ENCODE measurements at regions of chr11 and their contacts with region 1.

Region 1: DNA sequence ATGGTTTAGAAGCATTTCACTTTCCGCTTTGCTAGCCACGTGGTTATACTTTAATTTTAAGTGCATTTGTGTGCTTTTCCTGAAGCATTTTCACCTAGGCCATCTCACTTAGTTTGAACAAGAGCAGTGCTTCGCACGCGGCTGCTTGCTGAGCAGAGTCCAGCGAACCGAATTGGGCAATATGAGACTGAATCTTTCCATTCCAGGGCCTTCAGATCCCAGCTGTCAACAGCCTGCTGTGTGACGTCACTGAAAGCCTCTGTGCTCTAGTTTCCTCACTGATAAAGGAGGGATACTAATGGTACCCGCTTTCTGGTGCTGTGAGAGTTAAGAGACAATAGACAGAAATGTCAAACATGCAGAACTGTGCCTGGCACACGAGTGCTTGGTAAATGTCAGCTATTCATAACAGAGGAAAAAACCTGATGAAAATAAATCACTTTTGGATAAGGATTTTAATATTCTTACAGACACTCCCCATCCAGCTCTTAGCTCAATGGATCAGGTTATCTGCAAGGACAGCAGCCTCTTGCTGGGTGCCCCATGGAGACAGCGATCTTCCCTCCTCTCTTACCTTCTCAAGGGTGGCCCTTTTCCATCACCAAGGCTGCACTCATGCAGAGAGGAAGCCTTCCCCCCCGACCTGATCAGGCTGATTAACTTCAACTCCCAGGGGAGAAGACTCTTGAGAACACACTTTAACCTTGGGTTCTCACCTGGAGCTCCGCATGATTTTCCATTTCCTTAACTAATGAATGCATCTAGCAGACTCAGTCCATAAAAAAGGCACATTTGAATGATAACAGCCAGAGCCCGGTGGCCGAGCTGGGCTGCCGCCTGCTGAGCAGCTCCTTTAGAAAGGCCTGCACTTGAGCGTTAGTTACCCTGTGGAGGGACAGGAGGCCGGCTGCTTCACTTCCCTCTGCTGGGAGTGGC is 3.5 kb upstream of the GLB1L3 start:
- DNase-seq: no peak
- H3K4me3 ChIP-seq: no peak overlapping the region
- CTCF ChIP-seq: no peak

Region 2: GRCh38 chr11:134244655-134245054 is 28.0 kb before region 1 on chr11:
- CTCF ChIA-PET with region 1: no interaction called
- POLR2A ChIA-PET with region 1: no interaction called
- DNase-seq: no peak
- H3K4me3 ChIP-seq: no peak overlapping the region
- CTCF ChIP-seq: peak; percentile 55

Region 3: DNA sequence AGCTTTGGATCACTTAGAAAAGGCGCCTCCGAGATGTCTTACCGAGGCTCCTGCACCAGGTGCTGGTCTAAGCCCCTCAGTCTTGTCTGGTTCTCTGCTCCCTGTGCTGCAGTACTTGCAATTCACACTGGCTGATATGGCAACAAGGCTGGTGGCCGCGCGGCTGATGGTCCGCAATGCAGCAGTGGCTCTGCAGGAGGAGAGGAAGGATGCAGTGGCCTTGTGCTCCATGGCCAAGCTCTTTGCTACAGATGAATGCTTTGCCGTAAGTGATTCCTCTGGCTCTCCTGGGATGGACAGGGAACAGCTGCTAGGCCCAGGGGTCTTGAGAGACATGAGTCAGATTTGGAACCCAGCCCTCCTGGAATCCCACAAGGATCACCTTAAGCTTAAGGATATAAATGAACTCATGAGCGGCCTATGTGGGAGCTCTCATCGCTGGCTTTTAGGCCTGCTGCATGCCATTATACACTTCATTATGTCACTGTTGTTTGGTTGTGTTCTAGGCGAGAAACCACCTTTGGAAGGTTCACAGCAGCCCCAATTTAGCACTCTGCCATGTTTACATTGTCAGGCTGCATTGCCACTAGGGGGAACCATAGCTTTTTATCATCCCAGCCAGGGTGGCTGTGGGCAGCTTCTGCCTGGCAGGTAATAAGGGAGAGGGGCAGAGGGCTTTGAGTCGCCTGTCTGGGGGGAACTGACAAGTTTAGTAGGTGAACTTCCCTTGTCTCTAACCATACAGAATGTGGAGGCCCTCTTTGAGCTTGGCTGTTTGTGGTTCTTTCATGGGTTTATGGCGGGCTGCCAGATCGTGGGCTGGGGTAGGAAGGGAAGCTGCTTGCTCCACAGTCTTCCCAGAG is 10.8 kb before region 1 on chr11:
- CTCF ChIA-PET with region 1: interaction called, 11 read pairs
- POLR2A ChIA-PET with region 1: no interaction called
- DNase-seq: no peak
- H3K4me3 ChIP-seq: no peak overlapping the region
- CTCF ChIP-seq: peak; percentile 52